CD8-positive, alpha-beta T cell (primary cell): ENCODE measurements at regions of chr6 and their contacts with region 1.

Region 1: GRCh38 chr6:17599885-17600526 is at the start of gene FAM8A1:
- DNase-seq: peak; percentile 90 to 99 (median 96)
- ATAC-seq: peak; percentile 86
- H3K4me3 ChIP-seq: peak within 1 kb of the TSS; percentile 62 to 78
- H3K4me3 Mint-ChIP-seq: peak within 1 kb of the TSS; percentile 88
- H3K27ac ChIP-seq: peak within 1 kb of the TSS; percentile 82 to 91
- H3K27ac Mint-ChIP-seq: peak within 1 kb of the TSS; percentile 94
- H3K4me1 ChIP-seq: peaks cover 32% of the 10 kb centered on the region
- H3K4me1 Mint-ChIP-seq: peaks cover 46% of the 10 kb centered on the region
- H3K27me3 ChIP-seq: no peaks in the 10 kb centered on the region
- H3K27me3 Mint-ChIP-seq: no peaks in the 10 kb centered on the region
- CTCF ChIP-seq: peak; percentile 41
- total RNA-seq, gene FAM8A1: 17.6 to 17.8 TPM

Region 2: GRCh38 chr6:16136621-16137450 is 1463.2 kb before region 1 on chr6:
- CTCF ChIA-PET with region 1: no interaction called
- POLR2A ChIA-PET with region 1: no interaction called
- intact Hi-C with region 1: loop called in 1 of 2 experiments (anchors 5 kb)
- DNase-seq: peak in 6 of 9 experiments; percentile 22 to 63 (median 52)
- ATAC-seq: peak; percentile 70
- H3K4me3 ChIP-seq: peak overlapping the region; percentile 1 to 18
- H3K4me3 Mint-ChIP-seq: peak overlapping the region; percentile 77
- H3K27ac ChIP-seq: peak overlapping the region; percentile 17 to 56
- H3K27ac Mint-ChIP-seq: peak overlapping the region; percentile 89
- H3K4me1 ChIP-seq: peaks cover 72% of the 10 kb centered on the region
- H3K4me1 Mint-ChIP-seq: peaks cover 93% of the 10 kb centered on the region
- H3K27me3 ChIP-seq: no peaks in the 10 kb centered on the region
- H3K27me3 Mint-ChIP-seq: no peaks in the 10 kb centered on the region
- CTCF ChIP-seq: no peak

Region 3: GRCh38 chr6:17589406-17590096 is 10.5 kb before region 1 on chr6:
- CTCF ChIA-PET with region 1: interaction called, 32 read pairs
- POLR2A ChIA-PET with region 1: interaction called, 24 read pairs
- intact Hi-C with region 1: loop called (anchors 1 to 2 kb)
- DNase-seq: peak in 4 of 9 experiments; percentile 13 to 77 (median 54)
- ATAC-seq: peak; percentile 93
- H3K4me3 ChIP-seq: no peak overlapping the region
- H3K4me3 Mint-ChIP-seq: no peak overlapping the region
- H3K27ac ChIP-seq: no peak overlapping the region
- H3K27ac Mint-ChIP-seq: peak overlapping the region; percentile 73
- H3K4me1 ChIP-seq: peaks cover 18% of the 10 kb centered on the region
- H3K4me1 Mint-ChIP-seq: peaks cover 19% of the 10 kb centered on the region
- H3K27me3 ChIP-seq: no peaks in the 10 kb centered on the region
- H3K27me3 Mint-ChIP-seq: no peaks in the 10 kb centered on the region
- CTCF ChIP-seq: no peak

Region 4: GRCh38 chr6:17628873-17629272 is 28.9 kb after region 1 on chr6:
- CTCF ChIA-PET with region 1: interaction called, 4 read pairs
- POLR2A ChIA-PET with region 1: interaction called, 14 read pairs
- intact Hi-C with region 1: no loop called
- DNase-seq: no peak
- ATAC-seq: no peak
- H3K4me3 ChIP-seq: no peak overlapping the region
- H3K4me3 Mint-ChIP-seq: no peak overlapping the region
- H3K27ac ChIP-seq: peak overlapping the region in 1 of 2 experiments; percentile 2
- H3K27ac Mint-ChIP-seq: peak overlapping the region; percentile 41
- H3K4me1 ChIP-seq: peaks cover 15% of the 10 kb centered on the region
- H3K4me1 Mint-ChIP-seq: peaks cover 42% of the 10 kb centered on the region
- H3K27me3 ChIP-seq: no peaks in the 10 kb centered on the region
- H3K27me3 Mint-ChIP-seq: no peaks in the 10 kb centered on the region
- CTCF ChIP-seq: no peak

Region 5: GRCh38 chr6:17706580-17707370 is 106.8 kb after region 1 on chr6 and contains the start of gene NUP153:
- CTCF ChIA-PET with region 1: interaction called, 18 read pairs
- POLR2A ChIA-PET with region 1: interaction called, 47 read pairs
- intact Hi-C with region 1: loop called (anchors 1 kb)
- DNase-seq: peak; percentile 98 to 100 (median 100)
- ATAC-seq: peak; percentile 77
- H3K4me3 ChIP-seq: peak within 1 kb of the TSS; percentile 84 to 96
- H3K4me3 Mint-ChIP-seq: peak within 1 kb of the TSS; percentile 88
- H3K27ac ChIP-seq: peak within 1 kb of the TSS; percentile 99
- H3K27ac Mint-ChIP-seq: peak within 1 kb of the TSS; percentile 96
- H3K4me1 ChIP-seq: peaks cover 39% of the 10 kb centered on the region
- H3K4me1 Mint-ChIP-seq: peaks cover 40% of the 10 kb centered on the region
- H3K27me3 ChIP-seq: no peaks in the 10 kb centered on the region
- H3K27me3 Mint-ChIP-seq: no peaks in the 10 kb centered on the region
- CTCF ChIP-seq: no peak
- total RNA-seq, gene NUP153: 76.4 to 77.7 TPM